ENCODE measurements at regions of chr14 and their contacts with region 1.

Region 1: DNA sequence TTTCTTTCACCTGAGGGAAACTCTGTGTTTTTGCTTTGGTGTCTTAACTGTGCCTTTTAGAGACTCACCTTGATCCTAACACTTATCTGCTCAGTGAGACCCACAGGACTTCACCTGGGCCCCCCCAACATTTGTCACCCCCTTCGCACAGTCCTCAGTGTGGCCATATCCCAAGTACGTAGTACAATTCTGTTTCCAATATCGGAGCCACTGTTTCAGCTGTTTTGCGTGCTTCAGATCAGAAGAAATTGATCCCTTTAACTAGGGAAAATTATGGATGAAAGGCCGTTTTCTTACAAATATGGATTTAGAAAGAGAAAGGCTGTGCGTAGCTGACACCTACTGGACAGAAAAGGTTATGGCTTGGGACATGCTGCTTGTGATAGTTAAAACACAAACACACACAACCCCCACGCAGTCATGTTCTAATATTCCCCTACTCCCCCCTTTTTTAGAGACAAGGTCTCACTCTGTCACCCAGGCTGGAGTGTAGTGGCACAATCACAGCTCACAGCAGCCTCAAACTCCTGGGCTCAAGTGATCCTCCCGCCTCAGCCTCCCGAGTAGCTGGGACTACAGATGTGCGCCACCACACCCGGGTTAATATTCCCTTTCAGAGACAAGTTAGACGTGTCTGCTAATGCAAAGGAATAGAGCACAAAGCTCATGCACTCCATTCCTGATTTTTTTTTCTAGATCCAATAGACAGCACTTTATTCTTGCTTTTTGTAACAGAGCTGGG is 3.6 kb upstream of the SLC7A8 start:
- DNase-seq: peak; percentile 65
- CTCF ChIP-seq: peak; percentile 54

Region 2: GRCh38 chr14:23174276-23175184 is 12.6 kb before region 1 on chr14:
- CTCF ChIA-PET with region 1: interaction called, 42 read pairs
- POLR2A ChIA-PET with region 1: no interaction called
- DNase-seq: no peak
- CTCF ChIP-seq: no peak